ENCODE measurements at regions of chr1 and their contacts with region 1.

Region 1: DNA sequence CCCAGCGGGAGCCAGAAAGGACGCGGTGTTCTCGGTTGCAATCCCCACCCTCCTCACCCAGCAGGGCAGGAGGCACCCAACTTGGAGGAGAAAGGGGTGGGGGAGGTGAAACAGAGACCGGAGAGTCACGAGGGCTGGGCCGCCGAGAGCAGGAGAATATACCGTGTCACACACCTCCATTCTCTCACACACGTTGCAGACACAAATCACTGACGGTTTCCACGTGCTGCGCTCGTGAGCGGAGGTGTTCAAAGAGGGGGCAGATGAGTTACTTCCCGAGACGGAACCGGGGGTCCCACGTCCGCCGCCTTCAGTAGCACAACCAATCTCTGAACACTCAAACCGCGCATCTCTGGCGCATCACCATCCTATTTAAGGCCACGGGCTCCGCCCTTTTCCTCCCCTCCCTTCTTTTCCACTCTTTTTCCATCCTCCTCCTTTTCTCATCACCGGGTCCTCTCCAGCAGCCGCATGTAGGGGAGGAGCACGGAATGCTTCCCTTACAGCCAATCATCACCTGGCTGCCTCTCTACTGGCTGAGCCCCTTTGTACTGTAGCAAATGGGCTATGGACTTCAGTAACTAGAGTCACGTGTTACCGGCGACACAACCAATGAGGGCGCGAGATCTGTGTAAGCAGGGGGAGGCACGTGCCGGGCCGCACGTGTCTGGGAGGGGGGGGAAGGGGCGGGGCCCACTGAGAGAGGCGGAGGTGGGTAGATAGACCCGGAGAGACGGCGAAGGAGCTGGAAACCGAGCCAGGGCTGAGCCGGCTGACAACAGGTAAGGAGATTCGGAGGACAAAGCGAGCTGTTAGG is at the start of gene CIART:
- DNase-seq: peak; percentile 93 to 98
- H3K4me3 ChIP-seq: peak within 1 kb of the TSS; percentile 67 to 85
- H3K27ac ChIP-seq: peak within 1 kb of the TSS; percentile 79 to 92
- H3K4me1 ChIP-seq: peaks cover 0 to 18% of the 10 kb centered on the region in 2 donors
- H3K27me3 ChIP-seq: no peaks in the 10 kb centered on the region
- CTCF ChIP-seq: no peak
- total RNA-seq, gene CIART: 0.64 TPM

Region 2: DNA sequence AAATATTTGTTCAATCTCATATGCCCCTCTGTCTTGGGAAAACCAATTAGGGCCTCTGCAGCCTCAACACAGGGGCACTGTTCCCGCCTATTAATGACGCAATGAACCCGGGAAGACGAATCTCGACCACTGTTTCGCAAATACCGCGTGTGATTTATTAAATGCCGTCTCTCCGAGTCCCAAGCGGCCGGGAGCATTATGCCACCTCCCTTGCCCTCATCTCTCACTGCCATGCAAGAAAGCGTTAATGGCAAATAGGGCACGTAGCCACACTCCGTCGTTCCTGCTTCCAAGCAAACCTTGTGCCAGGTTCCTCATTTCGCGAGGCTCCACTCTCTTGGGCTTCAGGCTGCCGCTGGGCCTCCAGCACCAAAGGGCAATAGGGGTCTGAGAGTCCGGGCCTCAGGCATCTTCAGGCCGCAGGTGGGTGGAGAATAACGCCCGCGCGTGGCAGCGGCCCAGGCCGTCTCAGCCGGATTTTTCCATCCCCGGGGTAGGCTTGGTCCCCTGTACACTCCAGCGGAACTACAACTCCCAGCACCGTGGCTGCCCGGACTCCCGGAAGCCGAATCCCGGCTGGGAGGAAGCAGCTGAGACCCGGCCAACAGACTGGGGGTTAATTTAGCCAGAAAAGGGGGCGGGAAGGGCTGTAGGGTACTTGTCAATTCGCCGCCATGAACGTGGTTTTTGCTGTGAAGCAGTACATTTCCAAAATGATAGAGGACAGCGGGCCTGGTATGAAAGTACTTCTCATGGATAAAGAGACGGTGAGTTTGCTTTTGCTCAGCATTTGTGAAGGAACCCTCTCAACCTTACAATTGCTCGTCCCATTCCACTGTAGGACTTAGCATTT is 214.6 kb before region 1 on chr1 and contains the start of gene VPS45:
- intact Hi-C with region 1: loop called (anchors 5 kb)
- DNase-seq: peak; percentile 64 to 96
- H3K4me3 ChIP-seq: peak within 1 kb of the TSS; percentile 61 to 67
- H3K27ac ChIP-seq: peak within 1 kb of the TSS; percentile 83 to 90
- H3K4me1 ChIP-seq: peaks cover 4 to 18% of the 10 kb centered on the region in 2 donors
- H3K27me3 ChIP-seq: no peaks in the 10 kb centered on the region
- CTCF ChIP-seq: peak in 1 of 3 experiments; percentile 5
- total RNA-seq, gene VPS45: 11.3 TPM

Region 3: GRCh38 chr1:150235852-150236613 is 46.0 kb before region 1 on chr1 and contains the start of gene ANP32E:
- intact Hi-C with region 1: loop called (anchors 1 kb)
- DNase-seq: peak; percentile 93 to 98
- H3K4me3 ChIP-seq: peak within 1 kb of the TSS; percentile 84 to 100
- H3K27ac ChIP-seq: peak within 1 kb of the TSS; percentile 97 to 100
- H3K4me1 ChIP-seq: peaks cover 0 to 10% of the 10 kb centered on the region in 2 donors
- H3K27me3 ChIP-seq: no peaks in the 10 kb centered on the region
- CTCF ChIP-seq: peak in 2 of 3 experiments; percentile 16 to 43
- total RNA-seq, gene ANP32E: 8.9 TPM

Region 4: GRCh38 chr1:150256554-150257341 is 25.3 kb before region 1 on chr1:
- intact Hi-C with region 1: loop called (anchors 1 kb)
- DNase-seq: no peak
- H3K4me3 ChIP-seq: peak overlapping the region in 1 of 2 donors; percentile 57
- H3K27ac ChIP-seq: no peak overlapping the region
- H3K4me1 ChIP-seq: peaks cover 0 to 9% of the 10 kb centered on the region in 2 donors
- H3K27me3 ChIP-seq: no peaks in the 10 kb centered on the region
- CTCF ChIP-seq: no peak

Region 5: GRCh38 chr1:150268705-150269403 is 13.2 kb before region 1 on chr1 and contains the start of gene APH1A:
- intact Hi-C with region 1: loop called (anchors 1 kb)
- DNase-seq: peak; percentile 92 to 99
- H3K4me3 ChIP-seq: peak within 1 kb of the TSS; percentile 86 to 87
- H3K27ac ChIP-seq: peak within 1 kb of the TSS; percentile 91
- H3K4me1 ChIP-seq: peaks cover 12 to 28% of the 10 kb centered on the region in 2 donors
- H3K27me3 ChIP-seq: no peaks in the 10 kb centered on the region
- CTCF ChIP-seq: no peak
- total RNA-seq, gene APH1A: 73.1 TPM

Region 6: DNA sequence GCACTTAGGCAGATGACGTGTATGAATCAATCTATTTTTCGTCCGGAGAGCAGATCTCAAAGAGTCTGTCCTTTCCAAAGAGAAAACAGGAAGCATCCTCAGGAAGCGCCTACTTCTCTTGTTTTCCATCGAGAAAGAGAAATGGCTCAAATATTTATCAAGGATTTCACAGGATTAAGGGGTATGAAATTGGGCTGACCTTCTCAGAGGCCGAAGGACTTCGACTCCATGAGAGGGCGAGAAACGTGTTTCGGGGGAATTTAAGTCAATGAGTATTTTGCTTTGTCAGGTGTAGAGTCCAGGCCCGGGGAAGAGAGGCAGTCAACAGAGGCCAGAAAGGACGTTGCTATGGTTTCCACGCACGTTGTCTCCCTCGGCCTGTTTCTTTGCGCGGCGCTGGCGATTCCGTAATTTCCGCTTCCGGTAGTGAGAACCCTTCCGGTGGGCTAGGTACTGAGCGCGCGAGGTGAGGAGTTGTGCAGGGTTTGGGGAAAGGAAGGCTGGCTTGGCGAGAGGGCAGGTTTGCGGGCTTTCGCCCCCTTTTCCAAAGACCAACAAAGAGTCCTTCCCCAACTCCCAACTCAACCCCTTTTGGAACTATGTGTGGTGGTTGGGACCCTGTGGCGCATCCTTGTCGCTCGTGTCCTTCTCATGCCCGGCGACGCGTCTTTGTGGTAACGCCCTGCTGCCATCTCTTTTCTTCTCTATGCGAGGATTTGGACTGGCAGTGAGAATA is 11.6 kb after region 1 on chr1 and contains the start of gene MRPS21:
- intact Hi-C with region 1: loop called (anchors 1 kb)
- DNase-seq: peak; percentile 51 to 95
- H3K4me3 ChIP-seq: peak within 1 kb of the TSS; percentile 62 to 88
- H3K27ac ChIP-seq: peak within 1 kb of the TSS; percentile 78 to 85
- H3K4me1 ChIP-seq: peaks cover 3 to 8% of the 10 kb centered on the region in 2 donors
- H3K27me3 ChIP-seq: no peaks in the 10 kb centered on the region
- CTCF ChIP-seq: no peak
- total RNA-seq, gene MRPS21: 17.1 TPM

Region 7: GRCh38 chr1:150321826-150322166 is 39.8 kb after region 1 on chr1:
- intact Hi-C with region 1: loop called (anchors 5 kb)
- DNase-seq: no peak
- H3K4me3 ChIP-seq: peak overlapping the region; percentile 75 to 81
- H3K27ac ChIP-seq: peak overlapping the region; percentile 81 to 82
- H3K4me1 ChIP-seq: no peaks in the 10 kb centered on the region
- H3K27me3 ChIP-seq: no peaks in the 10 kb centered on the region
- CTCF ChIP-seq: no peak

Measured in ascending aorta (tissue), 2 donors.